ENCODE measurements at regions of chr22 and their contacts with region 1.

Region 1: DNA sequence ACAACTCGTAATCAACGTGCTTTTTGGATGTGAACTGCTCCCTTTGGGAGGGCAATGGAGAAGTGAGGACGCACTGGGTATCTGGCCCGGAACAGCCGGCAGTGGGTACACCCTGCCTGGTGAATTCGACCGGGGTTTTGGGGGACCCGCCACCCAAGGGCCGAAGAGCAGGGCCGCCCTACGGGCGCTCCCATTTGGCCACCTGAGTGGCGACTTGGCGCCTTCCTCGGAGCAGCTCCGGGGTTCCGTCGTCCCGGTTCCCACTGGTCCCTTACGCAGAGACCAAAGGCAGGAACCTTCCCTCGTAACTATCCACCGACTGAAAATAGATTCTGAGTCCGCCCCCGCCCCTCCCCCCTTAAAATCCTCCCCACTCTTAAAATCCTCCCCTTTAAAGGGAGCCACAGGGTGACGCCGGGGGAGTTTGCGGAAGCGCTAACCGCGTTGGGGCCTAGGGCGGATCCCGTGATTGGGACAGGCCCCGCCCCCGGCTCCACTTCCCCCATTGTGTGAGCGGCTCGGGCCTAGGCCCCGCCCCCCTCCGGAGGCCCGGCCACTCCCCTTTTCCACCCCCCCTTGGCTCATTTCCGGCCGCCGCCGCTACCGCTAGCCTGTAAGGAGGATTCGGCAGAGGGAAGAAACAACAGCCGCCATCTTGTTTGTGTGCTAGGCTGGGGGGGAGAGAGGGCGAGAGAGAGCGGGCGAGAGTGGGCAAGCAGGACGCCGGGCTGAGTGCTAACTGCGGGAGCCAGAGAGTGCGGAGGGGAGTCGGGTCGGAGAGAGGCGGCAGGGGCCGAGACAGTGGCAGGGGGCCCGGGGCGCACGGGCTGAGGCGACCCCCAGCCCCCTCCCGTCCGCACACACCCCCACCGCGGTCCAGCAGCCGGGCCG is 1.0 kb upstream of the EP300 start:
- DNase-seq: peak; percentile 99
- ATAC-seq: peak; percentile 92
- H3K4me3 Mint-ChIP-seq: peak overlapping the region; percentile 92
- H3K27ac Mint-ChIP-seq: peak overlapping the region; percentile 100
- H3K4me1 Mint-ChIP-seq: peaks cover 20% of the 10 kb centered on the region
- H3K27me3 Mint-ChIP-seq: no peaks in the 10 kb centered on the region
- CTCF ChIP-seq: no peak

Region 2: DNA sequence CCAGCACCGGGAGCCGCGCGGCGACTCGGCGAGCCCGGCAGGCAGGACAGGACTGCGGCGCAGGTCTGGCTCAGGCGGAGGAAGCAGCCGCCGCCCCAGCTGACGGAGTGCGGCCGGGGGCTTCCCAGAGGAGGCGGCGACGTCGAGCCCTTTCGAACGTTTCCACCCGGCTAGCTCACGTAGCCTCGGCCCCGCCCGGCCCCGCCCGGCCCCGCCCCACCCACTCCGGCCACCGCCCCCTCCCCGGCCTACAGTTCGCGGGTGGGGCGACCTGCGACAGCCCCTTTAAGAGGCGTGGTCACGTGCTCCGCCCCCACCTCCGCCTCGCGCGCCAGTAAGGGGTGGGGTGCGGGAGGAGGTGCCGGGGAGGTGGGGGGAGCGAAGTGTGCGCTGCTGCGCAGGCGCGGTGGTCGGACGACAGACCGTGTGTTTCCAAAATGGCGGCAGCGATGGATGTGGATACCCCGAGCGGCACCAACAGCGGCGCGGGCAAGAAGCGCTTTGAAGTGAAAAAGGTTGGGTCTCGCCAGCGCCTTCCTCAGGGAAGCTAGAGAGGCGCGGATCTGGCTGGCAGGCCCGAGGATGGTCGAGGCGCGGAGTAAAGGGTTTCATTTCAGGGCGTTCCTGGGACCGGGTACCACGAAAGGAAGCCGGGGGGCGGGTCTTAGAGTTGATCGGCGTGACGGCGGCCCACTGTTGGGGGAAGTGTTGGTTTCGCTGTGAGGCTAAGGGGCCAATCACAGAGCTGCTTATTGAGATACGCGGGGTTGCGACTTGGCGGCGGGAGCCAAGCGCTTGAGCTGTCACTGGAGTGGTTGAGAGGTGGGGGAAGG is 140.2 kb before region 1 on chr22 and contains the start of gene RBX1:
- CTCF ChIA-PET with region 1: interaction called, 4 read pairs
- POLR2A ChIA-PET with region 1: interaction called, 22 read pairs
- intact Hi-C with region 1: loop called (anchors 1 kb)
- DNase-seq: peak; percentile 99
- ATAC-seq: peak; percentile 87
- H3K4me3 Mint-ChIP-seq: peak within 1 kb of the TSS; percentile 98
- H3K27ac Mint-ChIP-seq: peak within 1 kb of the TSS; percentile 100
- H3K4me1 Mint-ChIP-seq: peaks cover 22% of the 10 kb centered on the region
- H3K27me3 Mint-ChIP-seq: no peaks in the 10 kb centered on the region
- CTCF ChIP-seq: no peak
- total RNA-seq, gene RBX1: 90.4 to 92.8 TPM

Region 3: DNA sequence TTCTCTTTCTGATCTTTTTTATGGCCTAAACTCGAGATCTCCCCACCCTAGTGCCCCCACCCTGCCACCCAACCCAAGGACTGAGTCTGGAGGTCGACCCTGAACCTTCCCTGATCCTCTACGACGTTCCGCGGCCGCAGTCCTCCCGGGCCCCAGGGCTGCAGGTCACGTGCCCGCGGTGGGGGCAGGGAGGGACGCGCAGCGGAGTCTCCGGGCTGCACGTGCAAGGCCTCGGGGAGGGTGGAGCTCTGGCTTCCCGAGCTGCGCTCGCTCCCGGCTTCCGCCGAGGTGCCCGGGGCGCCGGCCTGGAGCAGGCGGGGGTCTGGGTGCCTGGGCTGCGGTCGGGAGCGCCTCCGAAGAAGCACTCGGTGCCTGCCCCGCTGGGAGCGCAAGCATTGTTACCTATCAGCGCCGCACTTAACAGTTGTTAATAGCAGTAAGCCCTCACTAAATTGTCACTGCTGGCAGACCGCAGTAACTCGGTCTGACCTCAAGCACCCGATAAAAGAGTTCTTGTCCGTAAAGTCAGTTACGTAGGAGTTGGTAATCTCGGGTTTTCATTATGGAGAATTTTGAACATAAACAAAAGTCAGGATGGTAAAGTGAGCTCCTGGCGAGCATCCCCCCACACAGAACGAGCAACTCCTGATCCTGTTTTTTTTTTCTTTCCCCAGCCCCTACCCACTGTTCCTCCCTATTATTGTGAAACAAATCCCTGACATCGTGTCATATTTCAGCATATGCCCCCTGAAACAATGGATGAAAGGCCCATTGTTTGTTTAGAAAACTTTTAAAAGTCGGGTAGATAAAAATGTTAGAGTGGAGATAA is 68.7 kb before region 1 on chr22:
- CTCF ChIA-PET with region 1: no interaction called
- POLR2A ChIA-PET with region 1: no interaction called
- intact Hi-C with region 1: loop called (anchors 2 kb)
- DNase-seq: peak; percentile 80
- ATAC-seq: peak; percentile 68
- H3K4me3 Mint-ChIP-seq: peak overlapping the region; percentile 84
- H3K27ac Mint-ChIP-seq: peak overlapping the region; percentile 77
- H3K4me1 Mint-ChIP-seq: peaks cover 9% of the 10 kb centered on the region
- H3K27me3 Mint-ChIP-seq: no peaks in the 10 kb centered on the region
- CTCF ChIP-seq: no peak

Region 4: DNA sequence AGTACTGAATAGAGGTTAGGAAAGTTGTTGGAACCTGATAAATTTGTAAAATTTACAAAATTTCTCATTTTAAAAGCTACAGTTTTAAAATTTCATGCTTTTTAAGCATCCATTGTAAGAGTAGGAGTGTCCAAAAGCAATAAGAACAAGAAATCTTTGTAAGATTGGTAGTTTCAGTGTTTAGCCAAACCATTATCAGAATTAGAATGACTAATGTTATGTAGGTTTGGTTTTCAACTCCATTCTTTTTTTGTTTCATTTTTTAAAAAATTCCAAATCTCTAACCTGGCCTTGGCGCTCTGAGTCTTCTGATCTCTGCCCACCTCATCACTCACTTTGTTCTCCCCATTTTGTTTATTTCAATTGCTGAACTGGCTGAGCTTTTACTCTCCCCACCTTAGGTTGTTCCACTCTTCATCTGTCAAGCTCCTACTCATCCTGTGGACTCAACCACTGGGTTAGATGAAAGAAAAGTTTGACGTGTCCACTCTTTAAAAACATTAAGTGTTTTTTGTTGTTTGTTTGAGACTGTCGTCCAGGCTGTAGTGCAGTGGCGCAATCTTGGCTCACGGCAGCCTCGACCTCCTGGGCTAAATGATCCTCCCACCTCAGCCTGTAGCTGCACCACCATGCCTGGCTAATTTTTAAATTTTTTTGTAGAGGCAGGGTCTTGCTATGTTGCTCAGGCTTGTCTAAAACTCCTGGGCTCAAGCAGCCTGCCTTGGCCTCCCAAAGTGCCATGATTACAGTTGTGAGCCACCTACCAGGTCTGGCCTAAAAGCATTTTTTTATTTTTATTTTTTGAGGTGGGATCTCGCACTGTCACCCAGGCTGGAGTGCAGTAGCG is 15.0 kb after region 1 on chr22:
- CTCF ChIA-PET with region 1: interaction called, 4 read pairs
- POLR2A ChIA-PET with region 1: interaction called, 28 read pairs
- intact Hi-C with region 1: no loop called
- DNase-seq: peak; percentile 21
- ATAC-seq: peak; percentile 73
- H3K4me3 Mint-ChIP-seq: no peak overlapping the region
- H3K27ac Mint-ChIP-seq: peak overlapping the region; percentile 88
- H3K4me1 Mint-ChIP-seq: peaks cover 46% of the 10 kb centered on the region
- H3K27me3 Mint-ChIP-seq: no peaks in the 10 kb centered on the region
- CTCF ChIP-seq: no peak

Measured in activated CD8-positive, alpha-beta T cell treated with anti-CD3 and anti-CD28 coated beads for 36 hours (primary cell).